Caco-2 (cell line): ENCODE measurements at regions of chrX and their contacts with region 1.

Region 1: GRCh38 chrX:100928660-100929613 is at the start of gene XKRX:
- DNase-seq: peak; percentile 88
- H3K4me3 ChIP-seq: peak within 1 kb of the TSS; percentile 49
- H3K4me3 Mint-ChIP-seq: peak within 1 kb of the TSS; percentile 88
- H3K27ac Mint-ChIP-seq: peak within 1 kb of the TSS; percentile 83
- H3K4me1 ChIP-seq: peaks cover 13% of the 10 kb centered on the region
- H3K4me1 Mint-ChIP-seq: peaks cover 7% of the 10 kb centered on the region
- H3K27me3 ChIP-seq: no peaks in the 10 kb centered on the region
- H3K27me3 Mint-ChIP-seq: no peaks in the 10 kb centered on the region
- CTCF ChIP-seq: no peak
- total RNA-seq, gene XKRX: 28.7 and 29.7 TPM in 2 replicates

Region 2: GRCh38 chrX:100994352-100995281 is 65.7 kb after region 1 on chrX:
- CTCF ChIA-PET with region 1: no interaction called
- POLR2A ChIA-PET with region 1: no interaction called
- intact Hi-C with region 1: loop called (anchors 2 kb)
- DNase-seq: peak; percentile 18 to 35
- H3K4me3 ChIP-seq: no peak overlapping the region
- H3K4me3 Mint-ChIP-seq: no peak overlapping the region
- H3K27ac Mint-ChIP-seq: peak overlapping the region; percentile 75
- H3K4me1 ChIP-seq: peaks cover 13% of the 10 kb centered on the region
- H3K4me1 Mint-ChIP-seq: peaks cover 7% of the 10 kb centered on the region
- H3K27me3 ChIP-seq: no peaks in the 10 kb centered on the region
- H3K27me3 Mint-ChIP-seq: no peaks in the 10 kb centered on the region
- CTCF ChIP-seq: no peak

Region 3: GRCh38 chrX:101051549-101052302 is 122.8 kb after region 1 on chrX and contains the start of gene TRMT2B:
- CTCF ChIA-PET with region 1: no interaction called
- POLR2A ChIA-PET with region 1: no interaction called
- intact Hi-C with region 1: loop called (anchors 10 kb)
- DNase-seq: peak; percentile 78 to 80
- H3K4me3 ChIP-seq: peak within 1 kb of the TSS; percentile 67
- H3K4me3 Mint-ChIP-seq: peak within 1 kb of the TSS; percentile 87
- H3K27ac Mint-ChIP-seq: peak within 1 kb of the TSS; percentile 94
- H3K4me1 ChIP-seq: no peaks in the 10 kb centered on the region
- H3K4me1 Mint-ChIP-seq: peaks cover 1% of the 10 kb centered on the region
- H3K27me3 ChIP-seq: no peaks in the 10 kb centered on the region
- H3K27me3 Mint-ChIP-seq: no peaks in the 10 kb centered on the region
- CTCF ChIP-seq: no peak
- total RNA-seq, gene TRMT2B: 23.6 and 28.1 TPM in 2 replicates